ENCODE measurements at regions of chr2 and their contacts with region 1.

Region 1: DNA sequence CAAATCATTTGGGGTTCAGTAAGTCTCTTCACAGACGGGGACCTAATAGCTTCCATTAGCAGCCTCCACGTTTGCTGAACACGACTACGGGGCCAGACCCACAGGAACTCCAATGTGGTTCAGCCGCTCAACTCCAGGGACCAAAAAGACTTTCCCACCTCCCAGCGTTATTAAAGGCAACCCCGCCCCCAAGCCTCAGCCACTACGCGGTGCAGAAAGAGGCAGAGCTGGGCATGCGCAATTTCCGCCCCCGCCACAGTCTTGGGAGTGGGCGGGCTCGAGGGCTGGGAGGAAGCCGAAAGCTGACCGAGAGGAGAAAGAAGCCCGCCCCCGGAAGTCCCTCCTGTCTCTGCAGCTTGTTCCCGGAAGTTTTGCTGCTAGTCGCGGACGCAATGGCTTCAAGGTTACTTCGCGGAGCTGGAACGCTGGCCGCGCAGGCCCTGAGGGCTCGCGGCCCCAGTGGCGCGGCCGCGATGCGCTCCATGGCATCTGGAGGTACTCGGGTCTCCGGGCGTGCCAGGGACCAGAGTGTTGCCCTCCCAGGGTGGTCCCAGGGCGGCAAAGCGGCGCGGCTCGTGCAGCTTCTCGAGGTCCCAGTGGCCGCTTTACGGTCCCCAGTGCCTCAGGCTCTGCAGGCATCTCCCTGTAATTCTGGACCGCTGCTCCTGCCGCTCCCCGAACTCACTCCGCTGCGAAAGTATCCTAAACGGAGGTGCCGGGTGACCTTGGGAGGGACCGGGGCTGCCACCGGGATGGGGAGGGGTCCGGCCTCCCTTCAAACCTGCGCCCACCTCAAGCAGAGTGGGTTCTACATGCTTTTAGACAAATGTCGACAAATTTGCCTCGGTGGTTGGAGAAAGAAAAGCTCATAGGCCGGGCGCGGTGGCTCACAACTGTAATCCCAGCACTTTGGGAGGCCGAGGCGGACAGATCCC is at the start of gene COX5B:
- DNase-seq: peak; percentile 98 to 99 (median 99)
- H3K4me3 ChIP-seq: peak within 1 kb of the TSS; percentile 76
- H3K27ac ChIP-seq: peak within 1 kb of the TSS; percentile 84 to 89
- H3K4me1 ChIP-seq: peaks cover 5% of the 10 kb centered on the region
- H3K27me3 ChIP-seq: no peaks in the 10 kb centered on the region
- CTCF ChIP-seq: no peak
- EP300 ChIP-seq: no peak
- POLR2A ChIP-seq: peak; percentile 74
- total RNA-seq, gene COX5B: 133 to 478 (median 187) TPM

Region 2: GRCh38 chr2:97663965-97664635 is 18.1 kb after region 1 on chr2 and contains the start of gene ACTR1B:
- intact Hi-C with region 1: loop called in 1 of 4 experiments (anchors 2 kb)
- DNase-seq: peak; percentile 97 to 98 (median 98)
- H3K4me3 ChIP-seq: peak within 1 kb of the TSS; percentile 66
- H3K27ac ChIP-seq: peak within 1 kb of the TSS; percentile 51 to 87
- H3K4me1 ChIP-seq: peaks cover 12% of the 10 kb centered on the region
- H3K27me3 ChIP-seq: no peaks in the 10 kb centered on the region
- CTCF ChIP-seq: peak; percentile 18 to 64 (median 50)
- EP300 ChIP-seq: no peak
- POLR2A ChIP-seq: peak; percentile 84
- total RNA-seq, gene ACTR1B: 39.3 to 85.2 (median 67.4) TPM